ENCODE measurements at regions of chr19 and their contacts with region 1.

Region 1: DNA sequence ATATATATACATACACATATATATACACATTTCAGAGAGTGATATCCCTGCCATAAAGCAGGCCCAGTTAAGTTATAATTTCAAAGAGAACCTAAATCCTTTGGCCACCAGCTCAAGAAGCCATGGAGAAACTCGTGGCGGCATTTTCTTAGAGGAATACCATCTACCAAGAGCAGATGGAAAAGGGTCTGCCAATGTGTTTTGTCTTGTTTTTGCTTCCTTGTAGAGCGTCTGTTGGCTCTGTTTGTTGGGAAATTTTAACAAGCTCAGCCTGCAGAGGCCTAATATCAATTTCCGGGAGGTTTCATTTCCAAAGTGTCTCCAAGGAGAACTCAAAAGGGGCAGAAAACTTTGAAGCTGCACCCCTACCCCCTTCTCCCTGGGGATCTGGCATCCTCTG is 140.5 kb downstream of the IER2 start:
- DNase-seq: no peak
- ATAC-seq: no peak
- H3K4me3 Mint-ChIP-seq: no peak overlapping the region
- H3K27ac Mint-ChIP-seq: no peak overlapping the region
- H3K4me1 Mint-ChIP-seq: no peaks in the 10 kb centered on the region
- H3K27me3 Mint-ChIP-seq: no peaks in the 10 kb centered on the region
- CTCF ChIP-seq: no peak

Region 2: GRCh38 chr19:13707915-13708314 is 417.2 kb after region 1 on chr19:
- CTCF ChIA-PET with region 1: no interaction called
- POLR2A ChIA-PET with region 1: interaction called, 10 read pairs
- DNase-seq: no peak
- ATAC-seq: no peak
- H3K4me3 Mint-ChIP-seq: no peak overlapping the region
- H3K27ac Mint-ChIP-seq: no peak overlapping the region
- H3K4me1 Mint-ChIP-seq: no peaks in the 10 kb centered on the region
- H3K27me3 Mint-ChIP-seq: peaks cover 9% of the 10 kb centered on the region
- CTCF ChIP-seq: no peak